Natural killer cell (primary cell): ENCODE measurements at regions of chr5 and their contacts with region 1.

Region 1: GRCh38 chr5:103232393-103232999 is 26.1 kb upstream of the MACIR start:
- DNase-seq: peak in 1 of 2 donors; percentile 61
- ATAC-seq: peak; percentile 62 to 81 (median 79)
- H3K4me3 ChIP-seq: no peak overlapping the region
- H3K4me3 Mint-ChIP-seq: no peak overlapping the region
- H3K27ac ChIP-seq: no peak overlapping the region
- H3K27ac Mint-ChIP-seq: no peak overlapping the region
- H3K4me1 ChIP-seq: no peaks in the 10 kb centered on the region
- H3K4me1 Mint-ChIP-seq: no peaks in the 10 kb centered on the region
- H3K27me3 ChIP-seq: peaks cover under 1% of the 10 kb centered on the region
- H3K27me3 Mint-ChIP-seq: peaks cover 14 to 18% of the 10 kb centered on the region in 2 donors
- CTCF ChIP-seq: peak; percentile 77

Region 2: DNA sequence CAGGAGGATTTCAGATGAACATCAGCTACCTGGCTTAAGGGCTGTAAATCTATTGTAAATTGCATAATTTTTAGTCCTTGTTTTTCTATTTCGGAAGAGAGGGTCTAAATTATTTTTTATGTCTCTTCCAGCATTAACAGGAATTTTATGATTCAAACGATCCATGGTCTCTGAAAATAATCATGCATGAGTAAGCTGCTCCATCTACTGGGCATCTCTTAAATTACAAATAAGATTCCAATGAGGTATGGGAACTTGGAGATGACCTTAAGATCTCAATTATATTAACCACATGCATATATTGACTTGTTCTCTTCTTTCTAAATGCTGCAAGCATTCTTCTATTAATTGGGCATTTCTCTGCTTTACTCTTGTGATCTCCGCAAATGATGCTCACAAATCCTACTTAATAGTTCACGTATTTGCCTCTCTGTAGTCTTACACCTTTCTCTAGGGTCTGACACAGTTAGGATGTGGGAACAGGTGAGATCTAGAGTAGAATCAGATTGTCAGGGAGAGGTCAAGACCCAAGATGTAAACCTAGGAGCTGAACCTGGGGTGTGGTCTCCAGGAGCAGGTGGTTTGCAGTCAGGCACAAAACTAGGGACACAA is 243.2 kb after region 1 on chr5:
- intact Hi-C with region 1: loop called (anchors 1 kb)
- DNase-seq: peak in 1 of 2 donors; percentile 53
- ATAC-seq: peak in 1 of 3 donors; percentile 45
- H3K4me3 ChIP-seq: no peak overlapping the region
- H3K4me3 Mint-ChIP-seq: no peak overlapping the region
- H3K27ac ChIP-seq: no peak overlapping the region
- H3K27ac Mint-ChIP-seq: no peak overlapping the region
- H3K4me1 ChIP-seq: no peaks in the 10 kb centered on the region
- H3K4me1 Mint-ChIP-seq: no peaks in the 10 kb centered on the region
- H3K27me3 ChIP-seq: no peaks in the 10 kb centered on the region
- H3K27me3 Mint-ChIP-seq: peaks cover 0 to 15% of the 10 kb centered on the region in 2 donors
- CTCF ChIP-seq: peak; percentile 53